ENCODE measurements at regions of chr17 and their contacts with region 1.

Region 1: GRCh38 chr17:77429919-77430752 is 289.4 kb downstream of the SEC14L1 start:
- DNase-seq: peak; percentile 90
- H3K4me3 Mint-ChIP-seq: no peak overlapping the region
- H3K27ac Mint-ChIP-seq: peak overlapping the region; percentile 83
- H3K4me1 Mint-ChIP-seq: peaks cover 96% of the 10 kb centered on the region
- H3K27me3 Mint-ChIP-seq: no peaks in the 10 kb centered on the region

Region 2: DNA sequence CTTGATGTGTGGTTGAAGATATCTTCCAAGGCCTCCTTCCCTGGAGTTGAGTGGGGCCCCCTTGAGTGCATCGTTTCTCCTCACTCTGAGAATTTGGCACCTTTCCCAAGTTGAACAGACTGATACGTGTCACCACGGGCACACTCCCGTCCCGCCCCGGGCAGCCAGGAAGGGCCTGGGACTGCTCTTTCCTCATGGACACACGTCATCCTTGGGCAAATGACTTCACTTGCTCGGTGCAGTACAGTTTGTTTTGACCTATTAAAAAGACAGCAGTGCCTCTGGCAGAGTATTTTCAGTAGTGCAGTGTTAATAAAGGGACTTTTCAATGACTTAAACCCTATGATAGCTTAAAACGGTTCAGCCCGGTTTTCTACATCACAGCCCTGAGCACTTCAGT is 229.4 kb before region 1 on chr17:
- CTCF ChIA-PET with region 1: no interaction called
- DNase-seq: no peak
- H3K4me3 Mint-ChIP-seq: no peak overlapping the region
- H3K27ac Mint-ChIP-seq: no peak overlapping the region
- H3K4me1 Mint-ChIP-seq: no peaks in the 10 kb centered on the region
- H3K27me3 Mint-ChIP-seq: no peaks in the 10 kb centered on the region

Region 3: DNA sequence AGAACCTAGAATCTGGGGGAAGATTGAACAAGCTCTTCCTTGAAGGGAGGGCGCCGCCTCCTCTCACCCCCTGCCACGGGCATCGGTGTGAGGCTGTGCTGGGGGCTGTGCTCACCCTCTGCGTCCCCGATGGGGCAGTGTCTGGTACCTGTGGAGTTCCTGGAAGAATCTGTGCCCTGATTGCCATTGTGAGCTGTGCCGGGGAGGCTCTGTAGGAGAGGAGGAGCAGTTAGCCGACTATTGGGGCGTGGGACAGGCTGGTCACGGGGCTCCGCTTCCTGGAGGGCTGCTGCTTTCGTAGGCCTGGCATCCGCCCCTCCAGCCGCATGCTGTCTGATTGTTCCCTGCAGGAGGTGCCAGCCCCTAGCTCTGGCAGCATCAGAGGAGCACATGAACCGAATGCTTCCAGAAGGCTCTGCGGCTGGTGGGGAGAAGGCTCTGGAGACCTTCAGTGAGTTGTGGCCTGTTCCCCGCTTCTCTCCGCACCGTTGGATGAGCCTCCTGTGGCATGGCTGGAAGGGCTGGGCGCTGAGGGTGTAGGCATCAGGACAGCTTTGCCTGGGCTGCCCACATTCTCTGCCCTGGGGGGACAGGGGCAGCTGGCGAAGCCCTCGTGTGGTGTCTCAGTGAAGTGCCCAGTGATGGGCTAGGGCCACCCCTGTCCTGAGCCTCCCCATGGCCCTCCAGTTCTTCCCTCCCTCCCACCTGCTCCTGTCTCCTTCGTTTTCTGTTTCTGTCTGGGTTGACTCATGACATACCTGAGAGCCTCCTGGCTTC is 202.5 kb before region 1 on chr17:
- CTCF ChIA-PET with region 1: no interaction called
- DNase-seq: no peak
- H3K4me3 Mint-ChIP-seq: no peak overlapping the region
- H3K27ac Mint-ChIP-seq: no peak overlapping the region
- H3K4me1 Mint-ChIP-seq: no peaks in the 10 kb centered on the region
- H3K27me3 Mint-ChIP-seq: peaks cover 23% of the 10 kb centered on the region

Region 4: DNA sequence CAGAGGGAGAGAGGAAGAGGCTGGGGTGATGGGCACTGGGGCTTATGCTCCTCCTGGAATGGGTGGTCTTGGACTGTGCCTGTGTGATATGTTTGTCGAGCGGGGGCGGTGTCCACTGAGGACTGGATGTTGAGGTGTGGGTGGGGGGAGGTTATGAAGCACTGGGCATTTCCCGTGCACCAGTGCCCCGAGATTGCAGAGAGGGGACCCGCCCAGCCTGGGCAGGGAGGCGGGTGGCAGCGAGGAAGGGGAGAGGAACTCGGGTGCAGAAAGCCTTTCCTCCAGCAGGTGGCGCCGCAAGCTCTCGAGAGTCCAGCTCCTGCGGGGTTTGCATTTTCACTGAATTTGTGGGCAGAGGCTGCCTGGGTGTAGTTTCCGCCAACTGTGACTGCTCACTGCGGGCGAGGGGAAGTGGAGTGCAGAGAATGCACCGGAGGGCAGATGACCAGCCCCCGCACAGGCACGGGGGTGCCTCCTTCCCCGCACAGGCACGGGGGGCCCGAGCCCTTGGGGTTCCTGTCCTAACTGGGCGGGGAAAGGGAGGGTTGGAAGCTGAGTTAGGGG is 98.8 kb before region 1 on chr17:
- CTCF ChIA-PET with region 1: interaction called, 22 read pairs
- DNase-seq: peak; percentile 98
- H3K4me3 Mint-ChIP-seq: peak overlapping the region; percentile 68
- H3K27ac Mint-ChIP-seq: peak overlapping the region; percentile 94
- H3K4me1 Mint-ChIP-seq: peaks cover 71% of the 10 kb centered on the region
- H3K27me3 Mint-ChIP-seq: peaks cover 8% of the 10 kb centered on the region

Region 5: GRCh38 chr17:77444984-77445759 is 15.0 kb after region 1 on chr17:
- CTCF ChIA-PET with region 1: interaction called, 27 read pairs
- DNase-seq: peak; percentile 92
- H3K4me3 Mint-ChIP-seq: peak overlapping the region; percentile 85
- H3K27ac Mint-ChIP-seq: peak overlapping the region; percentile 98
- H3K4me1 Mint-ChIP-seq: peaks cover 100% of the 10 kb centered on the region
- H3K27me3 Mint-ChIP-seq: no peaks in the 10 kb centered on the region

Region 6: DNA sequence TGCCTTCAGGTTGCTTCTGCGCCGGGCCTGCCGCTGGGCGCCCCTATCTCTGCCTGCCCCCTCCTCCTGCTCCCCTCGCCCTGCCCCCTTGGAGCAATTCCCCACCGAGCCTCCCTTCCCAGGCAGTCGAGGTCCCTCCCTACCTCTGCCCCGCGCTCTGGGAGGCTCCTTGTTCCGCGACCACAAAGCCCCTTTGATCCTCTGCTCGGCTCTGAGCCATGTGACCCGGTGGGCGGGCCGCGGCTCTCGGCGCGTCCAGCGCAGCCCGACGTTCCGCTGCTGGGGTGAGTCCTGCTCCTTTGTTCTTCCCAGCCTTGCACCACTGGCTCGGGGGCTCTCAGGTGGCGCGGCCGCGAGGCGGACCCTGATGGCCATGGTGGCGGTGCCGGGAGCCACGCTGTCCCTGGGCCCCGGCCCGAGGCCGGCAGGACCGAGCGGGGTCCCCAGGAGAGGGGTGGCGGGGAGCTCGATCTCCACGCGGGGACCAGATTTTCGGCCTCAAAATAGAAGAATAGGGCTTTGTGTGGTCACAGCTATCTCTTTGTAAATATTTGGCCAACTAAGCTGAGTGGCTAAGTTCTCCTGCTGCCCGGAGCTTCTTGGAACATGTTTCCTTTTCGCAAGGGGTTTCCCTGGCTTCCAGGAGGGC is 21.2 kb after region 1 on chr17:
- CTCF ChIA-PET with region 1: interaction called, 21 read pairs
- DNase-seq: peak; percentile 90
- H3K4me3 Mint-ChIP-seq: peak overlapping the region; percentile 100
- H3K27ac Mint-ChIP-seq: peak overlapping the region; percentile 94
- H3K4me1 Mint-ChIP-seq: peaks cover 62% of the 10 kb centered on the region
- H3K27me3 Mint-ChIP-seq: no peaks in the 10 kb centered on the region

Region 7: GRCh38 chr17:77471984-77472461 is 41.9 kb after region 1 on chr17:
- CTCF ChIA-PET with region 1: interaction called, 16 read pairs
- DNase-seq: no peak
- H3K4me3 Mint-ChIP-seq: peak overlapping the region; percentile 36
- H3K27ac Mint-ChIP-seq: peak overlapping the region; percentile 85
- H3K4me1 Mint-ChIP-seq: peaks cover 96% of the 10 kb centered on the region
- H3K27me3 Mint-ChIP-seq: no peaks in the 10 kb centered on the region

Region 8: GRCh38 chr17:77476931-77477877 is 47.1 kb after region 1 on chr17:
- CTCF ChIA-PET with region 1: interaction called, 16 read pairs
- DNase-seq: no peak
- H3K4me3 Mint-ChIP-seq: no peak overlapping the region
- H3K27ac Mint-ChIP-seq: peak overlapping the region; percentile 77
- H3K4me1 Mint-ChIP-seq: peaks cover 73% of the 10 kb centered on the region
- H3K27me3 Mint-ChIP-seq: no peaks in the 10 kb centered on the region

Region 9: DNA sequence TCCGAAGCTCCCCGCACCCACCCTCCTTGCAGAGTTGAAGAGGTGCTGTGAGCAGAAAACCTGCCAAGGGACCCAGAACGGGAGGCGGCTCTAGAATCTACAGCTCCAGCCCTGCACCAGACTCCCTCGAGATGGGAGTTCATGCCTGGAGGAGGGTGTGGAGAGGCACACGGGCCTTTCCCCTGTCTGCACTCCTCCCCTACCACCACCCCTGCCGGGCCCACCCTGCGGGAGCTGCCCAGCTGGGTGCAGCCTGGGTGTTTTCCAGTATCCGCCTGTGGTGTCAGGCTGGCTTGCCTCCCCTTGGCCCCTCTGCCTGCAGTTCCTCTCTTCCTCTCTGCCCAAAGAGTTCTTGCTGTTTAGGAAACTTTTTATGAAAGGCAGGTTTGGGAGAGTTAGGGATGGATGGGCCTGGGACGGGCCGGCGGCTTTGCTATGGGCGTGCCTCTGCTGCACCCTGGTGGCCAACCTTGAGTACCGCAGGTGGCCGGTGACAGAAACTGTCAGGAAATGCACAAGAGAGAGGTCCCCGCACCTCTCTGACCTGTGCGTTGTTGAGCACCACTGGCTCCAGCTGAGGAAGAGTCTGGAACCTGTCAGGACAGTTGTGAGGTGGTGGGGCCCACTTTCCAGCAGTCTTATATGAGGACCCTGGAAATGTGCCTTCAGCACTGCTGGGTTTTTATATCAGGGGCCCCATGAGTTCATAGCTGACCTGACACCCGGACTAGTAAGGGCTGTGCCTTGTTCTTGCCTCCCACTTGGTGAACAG is 64.7 kb after region 1 on chr17:
- CTCF ChIA-PET with region 1: interaction called, 119 read pairs
- DNase-seq: peak; percentile 78
- H3K4me3 Mint-ChIP-seq: no peak overlapping the region
- H3K27ac Mint-ChIP-seq: peak overlapping the region; percentile 76
- H3K4me1 Mint-ChIP-seq: peaks cover 28% of the 10 kb centered on the region
- H3K27me3 Mint-ChIP-seq: no peaks in the 10 kb centered on the region

Measured in activated naive CD4-positive, alpha-beta T cell treated with anti-CD3 and anti-CD28 coated beads, Interleukin-2, amount 10 ng/mL, durations not matched to agents 7 days and 5 days (primary cell).